ENCODE measurements at regions of chr1 and their contacts with region 1.

Region 1: DNA sequence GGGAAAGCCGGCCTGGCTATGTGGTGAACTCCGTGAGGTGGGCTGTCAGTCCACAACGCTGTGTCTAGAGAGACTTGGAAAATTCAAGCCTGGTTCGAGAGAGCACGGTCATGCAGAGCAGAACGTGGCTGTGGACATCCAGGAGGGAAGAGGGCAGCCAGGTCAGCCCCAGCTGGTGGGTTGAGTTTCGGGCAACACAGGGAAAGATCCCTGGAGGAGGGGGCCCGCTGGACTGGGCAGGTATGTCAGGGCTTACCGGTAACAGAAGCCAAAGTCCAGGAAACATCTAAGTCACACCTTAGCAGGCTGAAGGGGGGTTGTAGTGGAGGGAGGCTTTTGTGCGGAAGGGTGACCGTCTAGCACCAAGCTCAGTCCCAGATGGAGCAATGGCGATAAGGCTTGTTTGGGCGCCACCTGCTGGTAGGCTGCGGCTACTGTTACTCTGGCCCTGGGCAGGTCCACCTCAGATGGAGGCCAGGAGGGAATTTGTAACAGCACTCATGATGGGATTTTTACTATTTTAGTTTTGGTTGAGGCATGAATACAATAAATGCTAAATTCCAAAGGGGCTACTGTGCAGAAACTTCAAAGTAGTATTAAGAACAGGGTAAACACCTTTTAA is 143.3 kb upstream of the ZNF644 start:
- DNase-seq: peak; percentile 81
- ATAC-seq: peak; percentile 95
- H3K4me3 Mint-ChIP-seq: no peak overlapping the region
- H3K27ac Mint-ChIP-seq: no peak overlapping the region
- H3K4me1 Mint-ChIP-seq: no peaks in the 10 kb centered on the region
- H3K27me3 Mint-ChIP-seq: peaks cover 4% of the 10 kb centered on the region
- CTCF ChIP-seq: peak; percentile 92

Region 2: DNA sequence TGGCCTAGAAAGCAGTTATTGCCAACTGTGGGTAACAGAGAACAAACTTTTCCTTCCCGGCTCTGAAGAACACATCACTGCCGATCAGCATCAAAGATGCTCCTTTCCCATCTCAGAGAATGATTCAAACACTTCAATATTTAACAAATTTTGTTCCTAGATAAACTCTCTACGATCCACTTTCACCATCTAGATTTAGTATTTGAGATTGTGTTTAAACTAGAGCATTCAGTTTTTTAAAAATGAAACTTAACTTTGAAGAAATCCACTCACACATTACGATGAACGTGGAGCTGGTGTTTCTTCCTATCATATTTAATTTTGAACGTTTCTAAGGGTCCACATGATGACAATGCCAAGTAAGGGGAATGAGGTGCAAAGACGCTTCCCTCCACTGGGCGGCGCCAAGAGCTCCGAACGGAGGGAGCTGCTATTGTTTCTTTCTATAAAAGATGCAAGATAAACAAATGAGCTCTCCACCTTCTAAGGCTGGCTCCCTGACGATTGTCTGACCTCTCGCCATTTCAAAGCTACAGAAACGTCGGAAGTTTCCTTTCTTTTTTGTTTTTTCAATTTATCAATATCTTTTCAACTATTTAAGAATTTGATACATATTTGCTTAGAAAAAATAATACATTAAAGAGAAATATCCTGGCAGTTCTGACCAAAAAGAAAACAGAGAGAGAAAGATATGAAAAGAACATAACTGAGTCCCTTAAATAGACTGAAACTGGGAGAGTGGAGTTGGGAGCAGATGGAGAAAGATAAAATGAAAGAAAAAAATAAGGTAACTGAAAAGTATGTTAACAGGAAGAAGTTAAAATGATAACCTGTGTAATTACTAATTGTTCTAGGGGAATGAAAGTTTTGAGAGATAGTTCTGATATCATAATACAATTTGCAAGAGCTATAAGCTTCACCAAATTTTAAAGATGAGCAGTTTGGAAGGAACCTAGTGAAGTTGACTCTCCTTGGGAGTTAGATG is 443.6 kb before region 1 on chr1:
- CTCF ChIA-PET with region 1: interaction called, 33 read pairs
- POLR2A ChIA-PET with region 1: no interaction called
- intact Hi-C with region 1: loop called (anchors 10 kb)
- DNase-seq: peak; percentile 68
- ATAC-seq: peak; percentile 52
- H3K4me3 Mint-ChIP-seq: no peak overlapping the region
- H3K27ac Mint-ChIP-seq: no peak overlapping the region
- H3K4me1 Mint-ChIP-seq: peaks cover 47% of the 10 kb centered on the region
- H3K27me3 Mint-ChIP-seq: peaks cover 86% of the 10 kb centered on the region
- CTCF ChIP-seq: peak; percentile 86

Region 3: DNA sequence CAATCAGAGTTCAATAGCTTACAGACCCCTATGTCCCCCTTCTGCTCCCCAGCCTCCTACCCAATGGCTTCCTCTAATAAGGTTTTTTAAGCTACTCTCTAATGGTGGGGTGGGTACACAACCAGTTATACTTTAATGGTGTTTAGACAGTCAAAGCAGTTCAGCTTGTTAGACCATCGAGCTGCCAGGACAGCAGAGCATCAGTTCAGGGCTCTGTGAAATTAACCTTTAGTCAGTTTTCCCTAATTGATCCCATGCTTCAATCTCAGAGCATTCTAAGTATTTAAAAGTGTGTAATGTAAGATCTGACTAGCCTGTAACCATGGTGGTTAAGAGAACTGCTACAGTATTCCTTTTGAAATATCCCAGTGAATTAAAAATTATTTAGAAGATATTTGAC is 36.1 kb before region 1 on chr1:
- CTCF ChIA-PET with region 1: interaction called, 15 read pairs
- POLR2A ChIA-PET with region 1: no interaction called
- intact Hi-C with region 1: no loop called
- DNase-seq: no peak
- ATAC-seq: no peak
- H3K4me3 Mint-ChIP-seq: no peak overlapping the region
- H3K27ac Mint-ChIP-seq: no peak overlapping the region
- H3K4me1 Mint-ChIP-seq: peaks cover 13% of the 10 kb centered on the region
- H3K27me3 Mint-ChIP-seq: peaks cover 4% of the 10 kb centered on the region
- CTCF ChIP-seq: no peak

Region 4: GRCh38 chr1:91201176-91201575 is 36.0 kb after region 1 on chr1:
- CTCF ChIA-PET with region 1: interaction called, 18 read pairs
- POLR2A ChIA-PET with region 1: no interaction called
- intact Hi-C with region 1: no loop called
- DNase-seq: no peak
- ATAC-seq: no peak
- H3K4me3 Mint-ChIP-seq: no peak overlapping the region
- H3K27ac Mint-ChIP-seq: no peak overlapping the region
- H3K4me1 Mint-ChIP-seq: no peaks in the 10 kb centered on the region
- H3K27me3 Mint-ChIP-seq: peaks cover 12% of the 10 kb centered on the region
- CTCF ChIP-seq: no peak

Region 5: DNA sequence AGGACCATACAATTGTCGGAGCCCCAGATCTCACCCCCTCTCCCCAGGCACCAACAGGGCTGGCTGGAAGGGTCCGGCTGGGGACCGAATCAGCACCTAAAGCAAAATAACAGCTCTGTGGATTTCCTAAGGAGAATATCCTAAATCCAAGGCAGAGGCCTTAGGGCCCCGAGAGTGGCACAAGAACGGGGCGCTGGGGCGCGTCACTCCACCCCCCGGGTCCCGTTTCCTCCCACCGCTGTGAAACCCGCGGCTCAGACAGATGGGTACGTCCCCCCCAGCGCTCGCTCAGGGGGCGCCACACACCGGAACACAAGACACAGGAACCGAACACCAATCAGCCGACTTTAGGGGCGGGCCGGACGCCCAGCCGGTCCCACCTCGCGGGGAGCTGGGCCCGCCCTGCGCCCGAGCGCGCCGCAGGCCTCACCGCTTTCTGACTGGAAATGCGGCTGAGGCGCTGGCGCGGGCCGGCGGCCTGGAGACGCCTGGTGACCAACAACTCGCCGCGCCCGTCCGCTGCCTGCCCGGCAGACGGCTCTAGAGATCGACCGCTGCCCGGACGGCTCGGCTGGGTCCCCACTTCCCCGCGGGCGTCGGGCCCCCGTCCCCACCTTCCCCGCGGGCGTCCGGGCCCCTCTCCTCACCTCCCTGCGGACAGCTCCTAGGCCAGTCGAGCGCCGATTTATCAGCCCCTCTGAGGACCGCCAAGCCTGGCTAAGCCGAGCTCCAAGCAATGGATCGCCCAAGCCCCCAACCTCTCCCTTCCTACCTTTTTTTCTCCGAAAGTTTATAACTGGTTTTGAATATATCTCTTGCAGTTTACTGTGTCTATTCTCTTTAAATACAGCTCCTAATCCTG is 239.2 kb after region 1 on chr1 and contains the start of gene HFM1:
- CTCF ChIA-PET with region 1: interaction called, 11 read pairs
- POLR2A ChIA-PET with region 1: no interaction called
- intact Hi-C with region 1: no loop called
- DNase-seq: peak; percentile 82
- ATAC-seq: peak; percentile 100
- H3K4me3 Mint-ChIP-seq: peak within 1 kb of the TSS; percentile 61
- H3K27ac Mint-ChIP-seq: no peak within 1 kb of the TSS
- H3K4me1 Mint-ChIP-seq: peaks cover 4% of the 10 kb centered on the region
- H3K27me3 Mint-ChIP-seq: peaks cover 31% of the 10 kb centered on the region
- CTCF ChIP-seq: peak; percentile 20
- total RNA-seq, gene HFM1: 0.47 TPM in 1 of 2 experiments, not detected in the other